Activated T-helper 1 cell treated with anti-CD3 and anti-CD28 coated beads, Interleukin-12 subunit alpha, Interleukin-12 subunit beta, Interleukin-2, Interleukin-4 antibody, amounts not matched to agents 30 ng/mL and 10 ng/mL and 1 ng/mL, durations not matched to agents 14 hours and 24 hours and 36 hours (primary cell): ENCODE measurements at regions of chr3 and their contacts with region 1.

Region 1: DNA sequence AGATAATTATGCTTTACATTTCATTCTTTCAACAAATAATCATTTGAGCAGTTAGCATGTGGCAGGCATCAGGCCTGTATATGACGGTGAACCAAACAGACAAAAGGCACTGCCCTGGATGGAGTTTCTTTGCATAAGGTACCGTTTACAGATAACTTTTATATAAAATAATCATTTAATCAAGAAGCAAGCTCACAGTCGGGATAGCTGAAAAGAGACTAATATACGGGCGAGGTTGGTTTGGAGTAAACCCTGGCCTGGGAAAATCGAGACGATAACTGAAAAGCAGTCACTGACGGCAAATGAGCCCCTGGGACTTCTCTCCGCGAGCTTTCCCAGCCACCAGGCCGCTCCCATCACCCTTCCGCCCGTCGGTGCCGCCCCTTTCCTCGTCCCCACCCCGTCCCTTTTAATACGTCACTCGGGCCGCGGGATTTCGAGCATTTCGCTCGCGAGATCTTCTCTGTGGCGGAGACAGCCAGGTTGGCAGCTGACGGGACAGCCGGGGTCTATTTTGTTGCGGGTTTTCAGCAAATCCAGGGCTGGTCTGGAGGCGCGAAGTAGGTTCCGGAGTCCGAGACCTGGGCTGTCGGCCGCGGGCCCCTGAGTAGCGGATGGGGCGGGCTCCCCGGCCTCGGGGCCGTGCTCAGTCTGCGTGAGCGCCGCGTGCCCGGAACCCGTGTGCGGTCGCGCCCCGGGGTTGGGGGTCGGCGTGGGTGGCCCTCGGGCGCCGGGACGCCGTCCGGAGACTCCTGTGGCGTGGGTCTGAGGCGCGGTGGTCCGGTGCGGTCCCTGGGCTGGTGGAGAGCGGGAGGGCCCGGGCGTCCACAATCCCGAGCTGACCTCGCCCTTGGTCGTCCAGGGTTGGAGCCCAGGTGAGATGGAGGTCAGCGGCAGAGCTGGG is at the start of gene NMD3:
- DNase-seq: peak; percentile 88
- H3K4me3 Mint-ChIP-seq: peak within 1 kb of the TSS; percentile 94
- H3K27ac Mint-ChIP-seq: peak within 1 kb of the TSS; percentile 93
- H3K4me1 Mint-ChIP-seq: peaks cover 31% of the 10 kb centered on the region
- H3K27me3 Mint-ChIP-seq: peaks cover 10% of the 10 kb centered on the region
- total RNA-seq, gene NMD3: 74.5 and 79.6 TPM in 2 replicates

Region 2: DNA sequence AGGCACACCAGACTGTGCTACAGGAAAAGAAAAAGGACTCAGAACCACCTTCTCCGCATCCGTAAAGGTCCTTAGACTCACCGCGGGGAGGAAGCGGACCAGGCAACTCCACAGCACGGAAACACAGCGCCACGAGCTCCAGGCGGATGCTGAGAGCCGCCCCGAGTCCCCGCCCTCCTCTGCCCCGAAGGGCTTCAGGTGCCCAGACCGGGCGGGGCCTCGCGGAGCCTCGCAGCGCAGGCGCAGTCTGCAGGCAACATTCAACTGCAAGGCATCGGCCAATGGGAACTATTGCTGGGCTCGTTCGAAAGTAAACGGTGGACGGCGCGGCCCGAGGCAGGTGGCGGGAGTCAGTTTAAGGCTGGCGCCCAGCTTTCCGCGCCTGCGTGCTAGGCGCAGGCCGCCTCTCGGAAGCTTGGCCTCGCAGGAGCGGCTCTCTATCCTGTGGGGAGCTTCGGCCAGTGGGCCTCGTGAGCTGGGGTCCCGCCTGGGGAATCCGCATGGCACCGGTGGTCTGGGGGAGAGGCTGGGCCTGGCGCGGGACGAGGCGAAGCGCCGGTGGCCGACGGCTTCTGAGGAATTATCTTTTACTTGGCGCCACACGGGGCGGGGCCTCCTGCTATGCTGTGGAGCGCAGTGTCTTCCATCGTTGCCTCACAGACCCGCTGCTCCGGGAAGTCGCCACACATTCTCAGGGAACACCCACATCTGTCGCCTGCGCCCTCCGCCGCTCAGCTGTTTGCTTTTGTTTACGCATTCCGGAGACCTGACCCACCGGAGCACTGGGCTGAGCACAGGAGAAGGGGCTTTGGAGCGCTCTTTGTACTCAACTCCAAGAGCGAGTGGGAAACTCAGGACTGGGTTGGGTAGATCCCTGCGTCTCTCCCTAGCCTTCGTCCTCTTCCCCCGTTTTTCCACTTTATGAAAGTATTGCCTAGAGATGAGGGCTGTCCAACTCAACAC is 771.2 kb before region 1 on chr3 and contains the start of gene TRIM59:
- intact Hi-C with region 1: loop called (anchors 5 kb)
- DNase-seq: peak; percentile 97
- H3K4me3 Mint-ChIP-seq: peak within 1 kb of the TSS; percentile 95
- H3K27ac Mint-ChIP-seq: peak within 1 kb of the TSS; percentile 95
- H3K4me1 Mint-ChIP-seq: peaks cover 29% of the 10 kb centered on the region
- H3K27me3 Mint-ChIP-seq: peaks cover 6% of the 10 kb centered on the region
- total RNA-seq, gene TRIM59: 33.1 and 33.2 TPM in 2 replicates

Region 3: DNA sequence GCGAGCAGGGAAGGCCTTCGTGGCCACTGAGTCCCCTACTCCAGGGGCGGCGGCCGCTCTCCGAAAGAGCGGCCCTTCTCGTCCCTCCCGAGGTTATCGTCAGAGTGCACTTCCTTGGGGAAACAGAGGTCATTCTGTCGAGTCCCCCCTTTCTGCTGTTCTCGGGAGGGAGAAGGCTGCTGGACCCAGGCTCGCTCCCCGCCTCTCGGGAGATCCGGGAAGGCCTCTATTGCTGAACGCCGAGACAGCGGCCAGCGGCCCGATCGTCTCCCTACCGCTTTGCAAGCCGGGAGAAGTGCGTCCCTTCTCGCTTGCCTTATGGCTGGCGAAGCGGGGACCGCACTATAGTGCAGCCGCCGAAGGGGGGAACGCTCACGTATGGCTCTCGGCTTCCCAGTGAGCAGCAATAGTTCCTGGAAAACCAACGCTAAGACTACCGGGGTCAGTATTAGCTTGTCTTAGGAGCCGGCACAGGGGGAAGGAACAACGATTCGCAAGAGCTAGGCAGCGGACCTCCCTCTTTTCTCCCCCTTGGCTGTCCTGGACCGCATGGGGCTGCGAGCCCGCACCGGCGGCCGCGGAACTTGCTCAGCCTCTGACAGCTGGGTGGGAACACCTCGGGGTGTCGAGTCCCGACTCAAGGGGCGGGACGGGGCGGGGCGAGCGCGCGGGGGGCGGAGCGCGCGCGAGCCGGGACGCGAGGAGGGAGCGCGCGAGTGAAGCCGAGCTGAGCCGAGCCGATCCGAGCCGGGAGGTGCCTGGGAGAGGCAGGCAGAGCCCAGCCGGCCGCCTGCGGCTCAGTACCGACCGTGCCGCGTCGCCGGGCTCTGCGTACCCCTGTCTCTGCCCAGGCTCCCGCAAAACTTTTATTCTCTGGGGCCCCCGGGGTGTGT is 466.0 kb before region 1 on chr3:
- intact Hi-C with region 1: loop called (anchors 1 kb)
- DNase-seq: peak; percentile 84
- H3K4me3 Mint-ChIP-seq: peak overlapping the region; percentile 93
- H3K27ac Mint-ChIP-seq: peak overlapping the region; percentile 98
- H3K4me1 Mint-ChIP-seq: peaks cover 37% of the 10 kb centered on the region
- H3K27me3 Mint-ChIP-seq: peaks cover 40% of the 10 kb centered on the region

Region 4: GRCh38 chr3:160956806-160957205 is 264.3 kb before region 1 on chr3:
- intact Hi-C with region 1: loop called (anchors 2 kb)
- DNase-seq: no peak
- H3K4me3 Mint-ChIP-seq: no peak overlapping the region
- H3K27ac Mint-ChIP-seq: no peak overlapping the region
- H3K4me1 Mint-ChIP-seq: no peaks in the 10 kb centered on the region
- H3K27me3 Mint-ChIP-seq: peaks cover 2% of the 10 kb centered on the region

Region 5: GRCh38 chr3:161104561-161105551 is 116.2 kb before region 1 on chr3 and contains the start of gene B3GALNT1:
- intact Hi-C with region 1: loop called (anchors 5 kb)
- DNase-seq: peak; percentile 5
- H3K4me3 Mint-ChIP-seq: peak within 1 kb of the TSS; percentile 76
- H3K27ac Mint-ChIP-seq: peak within 1 kb of the TSS; percentile 77
- H3K4me1 Mint-ChIP-seq: peaks cover 24% of the 10 kb centered on the region
- H3K27me3 Mint-ChIP-seq: peaks cover 19% of the 10 kb centered on the region
- total RNA-seq, gene B3GALNT1: 2.4 and 2.6 TPM in 2 replicates

Region 6: DNA sequence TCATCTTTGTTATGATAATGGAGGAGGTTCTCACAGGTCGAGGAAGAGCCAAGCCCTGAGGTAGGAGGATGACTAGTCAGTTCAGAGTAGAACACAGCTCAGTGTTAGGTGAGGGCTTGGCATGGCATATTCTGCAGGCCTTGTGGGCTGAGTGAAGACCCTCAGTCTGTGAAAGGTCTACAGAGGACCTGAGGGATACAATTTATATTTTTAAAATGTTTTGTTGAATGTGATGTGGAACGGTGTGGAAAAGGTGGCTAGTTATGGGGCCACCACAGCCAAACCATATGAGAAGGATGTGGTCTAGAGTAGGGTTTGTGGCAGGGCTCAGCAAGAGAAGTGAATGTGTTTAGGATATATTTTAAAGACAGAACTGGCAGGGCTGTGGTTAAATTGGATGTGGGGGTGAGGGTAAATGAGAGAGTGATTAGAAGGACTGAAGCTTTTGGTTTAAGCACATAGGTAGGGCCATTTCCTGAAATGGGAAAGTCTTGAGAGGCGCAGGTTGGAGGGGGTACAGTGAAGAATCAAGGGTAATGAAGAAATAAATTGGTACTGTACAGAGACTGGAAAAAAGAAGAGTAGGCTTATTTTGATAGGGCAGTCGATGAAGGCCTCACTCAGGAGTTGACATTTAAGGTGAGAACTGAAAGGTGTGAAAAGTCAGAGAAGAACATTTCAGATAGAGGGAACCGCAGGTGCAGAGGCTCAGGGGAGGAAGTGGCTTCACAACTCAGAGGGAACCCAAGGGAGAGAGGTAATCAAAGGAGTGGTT is 89.7 kb after region 1 on chr3:
- intact Hi-C with region 1: loop called (anchors 2 kb)
- DNase-seq: peak; percentile 52
- H3K4me3 Mint-ChIP-seq: peak overlapping the region; percentile 2
- H3K27ac Mint-ChIP-seq: peak overlapping the region; percentile 56
- H3K4me1 Mint-ChIP-seq: peaks cover 22% of the 10 kb centered on the region
- H3K27me3 Mint-ChIP-seq: peaks cover 43% of the 10 kb centered on the region